Ovary (tissue), 10 donors: ENCODE measurements at regions of chr20 and their contacts with region 1.

Region 1: DNA sequence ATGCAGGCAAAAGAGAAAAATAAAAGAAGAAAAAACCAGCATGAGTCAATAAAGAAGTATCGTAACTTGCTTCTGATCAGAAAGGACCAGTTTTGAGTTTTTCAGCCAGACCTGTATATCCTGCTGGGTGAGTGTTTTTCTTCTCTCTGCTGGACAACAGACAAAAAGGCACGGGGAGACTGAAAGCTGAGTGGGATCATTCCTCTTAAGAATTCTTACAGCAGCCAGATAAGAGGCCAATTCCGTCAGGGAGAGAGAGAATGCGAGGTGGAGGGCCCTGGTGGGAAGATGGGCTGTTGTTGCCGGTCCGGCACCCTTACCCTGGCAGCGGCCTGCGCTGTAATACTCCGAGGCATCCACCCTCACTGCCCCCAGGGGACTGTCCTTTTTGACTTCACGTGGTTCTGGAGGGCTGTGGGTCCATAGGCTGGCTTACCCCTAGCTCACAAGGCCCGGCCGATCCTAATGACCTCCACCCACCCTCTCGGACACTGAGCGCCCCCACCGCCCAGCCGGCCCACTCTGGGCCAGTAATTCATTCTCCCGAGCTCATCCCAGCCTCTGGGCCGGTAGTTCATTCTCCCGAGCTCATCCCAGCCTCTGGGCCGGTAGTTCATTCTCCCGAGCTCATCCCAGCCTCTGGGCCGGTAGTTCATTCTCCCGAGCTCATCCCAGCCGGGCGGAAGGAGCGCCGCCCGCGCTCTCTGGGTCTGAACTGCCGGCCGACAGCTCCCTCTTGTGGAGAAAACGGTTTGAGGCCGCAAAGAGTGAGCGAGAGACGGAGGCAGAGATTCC is 118.3 kb upstream of the SIRPA start:
- DNase-seq: peak; percentile 83 to 95 (median 88)
- H3K4me3 ChIP-seq: peak overlapping the region; percentile 49
- H3K27ac ChIP-seq: no peak overlapping the region
- H3K4me1 ChIP-seq: peaks cover 4% of the 10 kb centered on the region
- H3K27me3 ChIP-seq: no peaks in the 10 kb centered on the region
- CTCF ChIP-seq: peak; percentile 59 to 75 (median 71)
- EP300 ChIP-seq: no peak
- POLR2A ChIP-seq: no peak

Region 2: DNA sequence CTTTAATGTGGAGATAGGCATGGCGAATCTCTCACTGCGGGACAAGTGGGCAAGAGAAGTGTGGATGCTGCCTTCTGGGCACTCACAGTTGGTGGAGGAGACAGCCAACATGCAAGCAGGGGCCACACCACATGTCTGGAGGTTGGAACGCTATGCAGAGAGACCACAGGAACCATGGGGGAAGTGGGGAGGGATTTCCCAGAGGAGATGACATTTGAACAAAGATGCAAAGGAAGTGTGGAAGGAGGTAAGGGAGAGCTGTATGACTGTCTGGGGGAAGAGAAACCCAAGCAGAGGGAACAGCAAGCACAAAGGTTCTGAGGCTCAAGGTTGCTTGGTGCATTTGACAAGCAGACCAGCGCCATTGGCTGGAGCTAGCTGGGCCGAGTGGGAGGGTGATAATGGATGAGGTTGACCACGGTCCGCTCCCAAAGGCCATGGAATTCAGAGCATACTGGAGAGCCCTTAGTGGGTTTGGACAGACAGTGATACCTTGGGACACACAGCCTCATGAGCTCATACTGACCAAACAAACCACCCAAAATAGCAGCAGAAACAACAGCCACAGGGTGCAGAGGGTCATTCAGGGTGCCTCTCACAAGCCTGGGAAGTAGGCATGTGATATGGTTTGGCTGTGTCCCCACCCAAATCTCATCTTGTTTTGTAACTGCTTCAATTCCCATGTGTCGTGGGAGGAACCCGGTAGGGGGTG is 951.0 kb before region 1 on chr20:
- intact Hi-C with region 1: no loop called
- DNase-seq: no peak
- H3K4me3 ChIP-seq: no peak overlapping the region
- H3K27ac ChIP-seq: no peak overlapping the region
- H3K4me1 ChIP-seq: no peaks in the 10 kb centered on the region
- H3K27me3 ChIP-seq: no peaks in the 10 kb centered on the region
- CTCF ChIP-seq: no peak
- EP300 ChIP-seq: no peak
- POLR2A ChIP-seq: no peak

Region 3: GRCh38 chr20:2469991-2470422 is 693.1 kb after region 1 on chr20:
- intact Hi-C with region 1: loop called in 1 of 4 experiments (anchors 10 kb)
- DNase-seq: peak in 2 of 5 donors; percentile 28 to 62
- H3K4me3 ChIP-seq: peak overlapping the region; percentile 72
- H3K27ac ChIP-seq: peak overlapping the region; percentile 83 to 97
- H3K4me1 ChIP-seq: peaks cover 7% of the 10 kb centered on the region
- H3K27me3 ChIP-seq: no peaks in the 10 kb centered on the region
- CTCF ChIP-seq: no peak
- EP300 ChIP-seq: no peak
- POLR2A ChIP-seq: no peak